Endothelial cell of umbilical vein (primary cell): ENCODE measurements at regions of chrX and their contacts with region 1.

Region 1: GRCh38 chrX:100973411-100973810 is 3.9 kb downstream of the ARL13A start:
- DNase-seq: peak; percentile 63
- H3K4me3 ChIP-seq: no peak overlapping the region
- H3K27ac ChIP-seq: peak overlapping the region; percentile 87
- H3K4me1 ChIP-seq: peaks cover 6% of the 10 kb centered on the region
- H3K27me3 ChIP-seq: no peaks in the 10 kb centered on the region
- CTCF ChIP-seq: no peak
- POLR2A ChIP-seq: no peak

Region 2: DNA sequence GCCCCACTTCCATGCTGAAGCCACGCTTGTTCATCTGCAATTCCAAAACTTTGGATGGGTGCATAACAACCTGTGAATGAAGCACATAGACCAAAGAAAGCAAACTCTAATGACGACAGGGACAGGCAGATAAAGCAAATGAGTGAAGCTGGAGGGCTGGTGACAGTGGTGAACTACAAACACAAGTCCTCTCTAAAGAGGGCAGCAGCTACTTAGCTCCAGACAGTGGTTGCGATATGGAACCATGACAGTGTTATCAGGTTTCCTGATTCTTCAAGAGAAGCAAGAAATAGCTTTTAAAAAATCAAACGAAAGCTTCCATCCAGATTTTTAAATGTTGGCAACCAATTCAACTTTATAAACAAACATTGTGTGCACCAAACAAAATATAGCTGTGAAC is 123.1 kb before region 1 on chrX:
- CTCF ChIA-PET with region 1: no interaction called
- POLR2A ChIA-PET with region 1: no interaction called
- dilution Hi-C with region 1: no loop called
- intact Hi-C with region 1: no loop called
- DNase-seq: no peak
- H3K4me3 ChIP-seq: no peak overlapping the region
- H3K27ac ChIP-seq: no peak overlapping the region
- H3K4me1 ChIP-seq: no peaks in the 10 kb centered on the region
- H3K27me3 ChIP-seq: no peaks in the 10 kb centered on the region
- CTCF ChIP-seq: no peak
- POLR2A ChIP-seq: no peak

Region 3: DNA sequence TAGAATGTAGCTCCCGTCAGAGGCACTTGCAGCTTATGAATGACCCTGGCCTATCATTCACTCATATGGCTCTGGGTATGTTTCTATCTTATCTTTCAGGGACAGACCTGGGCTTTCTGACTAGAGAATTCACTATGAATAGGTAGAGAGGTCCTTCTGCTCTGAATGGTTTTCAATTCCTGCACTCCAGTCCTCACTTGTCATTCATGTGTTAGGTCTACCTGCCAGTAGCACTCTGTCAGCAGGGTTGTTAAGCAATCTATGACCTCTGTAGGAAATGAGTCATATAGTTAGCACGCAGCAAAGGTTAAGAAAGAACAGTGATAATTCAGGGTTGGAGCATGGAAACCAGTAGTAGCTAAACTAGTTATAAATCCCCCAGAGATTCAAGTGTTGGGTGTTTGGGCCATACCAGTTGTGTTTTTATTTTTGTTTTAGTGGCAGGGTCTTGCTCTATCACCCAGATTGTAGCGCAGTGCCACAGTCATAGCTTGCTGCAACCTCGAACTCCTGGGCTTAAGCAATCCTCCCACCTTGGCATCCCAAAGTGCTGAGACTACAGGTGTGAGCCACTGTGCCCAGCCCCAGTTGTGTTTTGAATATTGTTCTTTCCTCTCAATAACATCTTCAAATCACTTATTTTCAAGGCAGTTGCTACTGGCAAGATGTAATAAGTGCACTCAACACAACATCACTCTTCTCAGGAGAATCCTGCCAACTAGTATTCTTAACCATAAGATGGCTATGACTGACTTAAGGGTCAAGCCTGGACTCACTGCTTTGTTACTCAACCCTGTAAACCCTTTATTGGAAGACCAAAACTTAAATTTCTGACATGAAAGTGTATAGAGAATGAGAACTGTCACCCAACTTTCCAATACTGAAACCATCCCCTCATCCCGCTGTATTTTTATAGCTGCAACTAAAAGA is 21.2 kb after region 1 on chrX:
- CTCF ChIA-PET with region 1: no interaction called
- POLR2A ChIA-PET with region 1: no interaction called
- dilution Hi-C with region 1: no loop called
- intact Hi-C with region 1: loop called (anchors 2 kb)
- DNase-seq: peak; percentile 41
- H3K4me3 ChIP-seq: no peak overlapping the region
- H3K27ac ChIP-seq: peak overlapping the region; percentile 4
- H3K4me1 ChIP-seq: peaks cover 20% of the 10 kb centered on the region
- H3K27me3 ChIP-seq: no peaks in the 10 kb centered on the region
- CTCF ChIP-seq: no peak
- POLR2A ChIP-seq: no peak